ENCODE measurements at regions of chr11 and their contacts with region 1.

Region 1: DNA sequence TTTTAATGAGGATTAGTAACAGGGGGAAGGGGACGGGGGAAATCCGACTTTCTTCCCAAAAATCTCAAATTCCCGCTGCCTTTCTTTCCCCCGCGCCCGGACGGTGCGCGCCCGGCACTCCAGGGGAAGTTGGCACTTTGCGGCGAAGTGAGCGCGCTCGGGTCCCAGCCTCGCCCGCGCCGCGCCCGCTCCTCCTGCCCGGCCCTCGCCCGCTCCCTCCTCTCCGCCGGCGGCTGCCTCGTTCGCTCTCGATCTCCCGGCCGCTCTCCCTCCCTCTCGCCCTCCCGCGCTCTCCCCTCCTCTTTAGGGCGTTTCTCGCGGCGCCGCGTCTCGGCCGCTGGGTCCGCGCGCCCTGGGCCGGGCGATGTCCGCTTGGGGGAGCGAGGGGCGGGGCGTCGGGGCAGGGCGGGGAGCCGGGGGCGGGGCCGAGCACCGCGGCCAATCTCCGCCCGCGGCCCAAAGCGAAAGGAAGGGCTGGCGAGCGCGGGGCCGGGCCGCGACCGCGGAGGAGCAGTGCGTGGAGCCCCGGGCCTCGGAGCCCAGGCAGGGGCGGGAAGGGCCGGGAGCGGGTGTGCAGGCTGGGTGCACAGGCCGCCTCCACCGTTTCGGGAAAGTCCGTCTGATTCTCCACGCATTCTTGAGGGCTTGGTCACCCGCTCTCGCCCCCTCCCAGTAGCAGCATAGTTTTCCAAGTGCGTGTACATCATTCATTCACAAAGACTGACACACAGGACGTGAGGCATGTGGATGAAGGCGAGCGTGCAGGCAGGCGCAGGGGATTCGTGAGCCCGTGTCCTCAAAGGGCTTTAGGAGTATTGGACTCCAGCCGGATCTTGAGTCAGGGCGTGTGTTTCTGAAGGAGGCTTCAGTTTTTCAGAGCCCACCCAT is 65.1 kb downstream of the ETS1 start:
- DNase-seq: peak; percentile 92
- ATAC-seq: peak; percentile 77
- H3K4me3 Mint-ChIP-seq: peak overlapping the region; percentile 95
- H3K27ac Mint-ChIP-seq: peak overlapping the region; percentile 96
- H3K4me1 Mint-ChIP-seq: peaks cover 37% of the 10 kb centered on the region
- H3K27me3 Mint-ChIP-seq: no peaks in the 10 kb centered on the region
- CTCF ChIP-seq: no peak

Region 2: DNA sequence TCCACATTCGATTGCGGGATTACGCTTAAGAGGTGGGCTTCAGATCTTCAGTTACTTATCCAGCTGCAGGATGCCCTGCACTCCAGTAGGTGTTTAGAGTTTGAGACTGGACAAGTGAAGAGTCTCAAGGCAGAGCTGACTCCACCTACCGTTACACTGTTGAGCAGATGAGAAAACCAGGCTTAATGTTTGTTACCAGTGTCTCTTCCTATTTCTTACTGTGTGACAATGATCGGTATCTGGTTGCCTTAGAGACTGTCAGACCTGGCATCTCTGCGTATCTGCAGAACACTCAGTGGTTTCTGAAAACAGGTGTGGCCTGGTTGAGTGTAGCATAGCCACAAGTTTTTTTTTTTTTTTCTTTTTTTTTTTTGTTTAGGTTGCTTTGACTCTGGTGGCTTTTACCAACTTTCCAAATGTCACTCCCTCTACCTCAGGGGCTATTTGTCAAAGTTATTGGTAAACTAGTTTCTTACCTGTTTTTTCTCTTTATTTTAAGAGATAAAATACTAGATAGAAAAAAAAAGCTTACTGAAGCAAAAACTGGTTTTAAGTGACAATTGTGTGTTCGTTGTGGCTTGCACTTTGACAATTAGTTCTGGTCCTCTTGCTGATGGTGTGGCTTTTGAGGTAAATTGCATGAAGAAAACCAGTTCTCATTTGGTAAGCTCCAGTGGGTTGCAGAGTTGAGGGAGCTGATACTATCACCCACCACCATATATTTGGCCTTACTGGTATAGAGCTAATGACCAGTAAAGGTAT is 219.7 kb before region 1 on chr11:
- CTCF ChIA-PET with region 1: interaction called, 7 read pairs
- POLR2A ChIA-PET with region 1: interaction called, 10 read pairs
- intact Hi-C with region 1: no loop called
- DNase-seq: peak; percentile 80
- ATAC-seq: peak; percentile 90
- H3K4me3 Mint-ChIP-seq: peak overlapping the region; percentile 85
- H3K27ac Mint-ChIP-seq: peak overlapping the region; percentile 90
- H3K4me1 Mint-ChIP-seq: peaks cover 79% of the 10 kb centered on the region
- H3K27me3 Mint-ChIP-seq: no peaks in the 10 kb centered on the region
- CTCF ChIP-seq: peak; percentile 14

Region 3: DNA sequence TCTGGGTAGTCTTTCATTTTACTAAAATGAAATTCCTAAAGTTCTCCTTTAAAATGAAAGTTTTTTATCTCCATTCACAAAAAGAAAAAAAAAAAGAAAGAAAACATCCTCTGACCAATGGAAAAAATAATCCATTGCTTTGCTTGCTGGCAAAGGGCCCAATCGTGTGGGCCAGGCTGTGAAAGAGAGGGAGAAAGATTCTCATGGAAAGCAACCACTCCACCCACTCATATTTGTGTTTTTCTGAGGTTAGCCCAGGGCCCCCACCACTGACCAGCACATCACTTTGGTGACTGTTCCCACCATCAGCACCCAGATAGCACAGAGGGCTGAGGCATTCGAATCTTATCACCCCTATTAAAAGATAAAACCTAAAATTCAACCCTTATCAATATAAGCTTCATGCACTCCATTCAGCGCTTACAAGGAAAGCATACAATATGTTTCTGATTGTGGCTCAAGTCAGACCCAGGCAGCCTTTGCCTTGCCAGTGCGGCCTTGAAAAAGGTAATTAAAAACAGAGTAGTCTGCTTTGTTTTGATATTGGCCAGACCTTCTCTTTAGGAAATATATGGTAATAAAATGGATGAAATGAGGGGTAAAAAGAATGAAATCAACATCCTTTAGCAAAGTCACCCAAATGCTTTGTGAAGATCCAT is 127.7 kb before region 1 on chr11:
- CTCF ChIA-PET with region 1: no interaction called
- POLR2A ChIA-PET with region 1: no interaction called
- intact Hi-C with region 1: no loop called
- DNase-seq: no peak
- ATAC-seq: no peak
- H3K4me3 Mint-ChIP-seq: no peak overlapping the region
- H3K27ac Mint-ChIP-seq: no peak overlapping the region
- H3K4me1 Mint-ChIP-seq: peaks cover 33% of the 10 kb centered on the region
- H3K27me3 Mint-ChIP-seq: no peaks in the 10 kb centered on the region
- CTCF ChIP-seq: no peak

Region 4: GRCh38 chr11:128482512-128483191 is 39.6 kb before region 1 on chr11:
- CTCF ChIA-PET with region 1: interaction called, 4 read pairs
- POLR2A ChIA-PET with region 1: interaction called, 47 read pairs
- intact Hi-C with region 1: no loop called
- DNase-seq: peak; percentile 79
- ATAC-seq: peak; percentile 66
- H3K4me3 Mint-ChIP-seq: peak overlapping the region; percentile 66
- H3K27ac Mint-ChIP-seq: peak overlapping the region; percentile 94
- H3K4me1 Mint-ChIP-seq: peaks cover 90% of the 10 kb centered on the region
- H3K27me3 Mint-ChIP-seq: no peaks in the 10 kb centered on the region
- CTCF ChIP-seq: no peak

Region 5: DNA sequence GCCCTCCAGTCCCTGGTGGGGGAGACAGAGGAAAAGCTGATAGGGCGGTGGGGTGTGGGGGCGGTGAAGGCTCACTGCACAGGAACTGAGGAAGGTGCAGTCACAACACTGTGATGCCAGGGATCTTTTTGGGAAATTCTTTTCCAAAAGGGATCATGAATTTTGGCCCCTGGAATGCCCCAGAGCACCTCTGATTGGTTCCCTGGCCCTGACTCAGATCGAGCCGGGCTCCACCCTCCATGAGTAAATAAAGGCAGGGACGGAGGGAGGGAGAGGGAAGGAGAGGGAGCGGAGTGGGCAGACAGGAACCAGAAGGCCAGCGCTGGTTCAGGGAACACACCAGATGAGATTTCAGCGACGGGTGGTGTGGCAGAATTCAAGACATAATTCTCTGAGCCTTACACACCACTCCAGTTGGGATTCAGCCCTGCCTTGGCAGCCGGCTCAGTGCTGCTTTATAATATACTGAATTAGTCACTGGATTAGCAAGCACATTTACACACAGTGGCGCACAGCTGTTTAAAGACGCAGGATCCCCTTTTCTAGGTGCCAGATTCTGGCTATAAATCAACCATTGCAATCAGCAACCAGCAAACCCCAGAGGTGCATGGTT is 15.2 kb before region 1 on chr11:
- CTCF ChIA-PET with region 1: interaction called, 93 read pairs
- POLR2A ChIA-PET with region 1: interaction called, 661 read pairs
- intact Hi-C with region 1: no loop called
- DNase-seq: peak; percentile 77
- ATAC-seq: peak; percentile 32
- H3K4me3 Mint-ChIP-seq: peak overlapping the region; percentile 95
- H3K27ac Mint-ChIP-seq: peak overlapping the region; percentile 96
- H3K4me1 Mint-ChIP-seq: peaks cover 86% of the 10 kb centered on the region
- H3K27me3 Mint-ChIP-seq: no peaks in the 10 kb centered on the region
- CTCF ChIP-seq: no peak

Region 6: GRCh38 chr11:128552783-128553661 is 30.7 kb after region 1 on chr11:
- CTCF ChIA-PET with region 1: interaction called, 19 read pairs
- POLR2A ChIA-PET with region 1: interaction called, 18 read pairs
- intact Hi-C with region 1: loop called (anchors 2 kb)
- DNase-seq: peak; percentile 41
- ATAC-seq: peak; percentile 8
- H3K4me3 Mint-ChIP-seq: peak overlapping the region; percentile 31
- H3K27ac Mint-ChIP-seq: peak overlapping the region; percentile 89
- H3K4me1 Mint-ChIP-seq: peaks cover 59% of the 10 kb centered on the region
- H3K27me3 Mint-ChIP-seq: no peaks in the 10 kb centered on the region
- CTCF ChIP-seq: no peak

Region 7: DNA sequence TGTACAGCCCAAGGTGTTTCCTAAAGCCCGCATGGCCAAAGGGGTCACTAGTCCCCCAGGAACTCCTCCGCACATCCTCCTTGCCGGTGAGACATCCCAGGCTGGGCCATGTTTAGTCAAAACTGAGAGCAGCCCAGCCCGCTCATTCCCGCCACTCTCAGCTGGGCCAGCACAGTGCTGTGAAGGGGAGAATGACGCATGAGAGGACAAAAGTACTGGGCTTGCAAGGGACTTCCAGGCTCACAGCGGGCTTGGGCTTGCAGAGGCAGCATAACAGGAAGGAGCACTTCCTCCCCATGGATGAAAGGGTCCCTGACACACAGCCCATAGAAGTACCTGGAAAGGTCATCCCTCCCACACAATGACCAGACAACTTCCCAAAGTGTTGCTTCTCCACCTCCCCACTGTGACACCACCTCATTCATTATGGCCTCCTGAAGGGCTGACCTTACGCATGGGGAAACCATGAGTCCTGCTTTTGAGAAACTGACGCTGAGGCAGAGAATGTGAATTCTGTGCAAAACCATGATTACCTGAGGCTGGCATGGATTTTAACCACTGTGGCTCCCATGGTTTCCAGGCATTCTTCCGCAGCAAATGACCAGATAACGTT is 46.0 kb after region 1 on chr11:
- CTCF ChIA-PET with region 1: no interaction called
- POLR2A ChIA-PET with region 1: no interaction called
- intact Hi-C with region 1: no loop called
- DNase-seq: peak; percentile 45
- ATAC-seq: peak; percentile 64
- H3K4me3 Mint-ChIP-seq: no peak overlapping the region
- H3K27ac Mint-ChIP-seq: peak overlapping the region; percentile 18
- H3K4me1 Mint-ChIP-seq: peaks cover 17% of the 10 kb centered on the region
- H3K27me3 Mint-ChIP-seq: no peaks in the 10 kb centered on the region
- CTCF ChIP-seq: no peak

Region 8: GRCh38 chr11:128757235-128757711 is 235.0 kb after region 1 on chr11:
- CTCF ChIA-PET with region 1: interaction called, 15 read pairs
- POLR2A ChIA-PET with region 1: no interaction called
- intact Hi-C with region 1: no loop called
- DNase-seq: peak; percentile 88
- ATAC-seq: peak; percentile 81
- H3K4me3 Mint-ChIP-seq: peak overlapping the region; percentile 23
- H3K27ac Mint-ChIP-seq: peak overlapping the region; percentile 94
- H3K4me1 Mint-ChIP-seq: peaks cover 83% of the 10 kb centered on the region
- H3K27me3 Mint-ChIP-seq: no peaks in the 10 kb centered on the region
- CTCF ChIP-seq: peak; percentile 70

Region 9: GRCh38 chr11:128862913-128863660 is 340.8 kb after region 1 on chr11:
- CTCF ChIA-PET with region 1: no interaction called
- POLR2A ChIA-PET with region 1: no interaction called
- intact Hi-C with region 1: no loop called
- DNase-seq: no peak
- ATAC-seq: no peak
- H3K4me3 Mint-ChIP-seq: no peak overlapping the region
- H3K27ac Mint-ChIP-seq: no peak overlapping the region
- H3K4me1 Mint-ChIP-seq: no peaks in the 10 kb centered on the region
- H3K27me3 Mint-ChIP-seq: peaks cover 1% of the 10 kb centered on the region
- CTCF ChIP-seq: no peak

Measured in activated CD8-positive, alpha-beta T cell treated with anti-CD3 and anti-CD28 coated beads for 36 hours (primary cell).